ENCODE measurements at regions of chr2 and their contacts with region 1.

Region 1: DNA sequence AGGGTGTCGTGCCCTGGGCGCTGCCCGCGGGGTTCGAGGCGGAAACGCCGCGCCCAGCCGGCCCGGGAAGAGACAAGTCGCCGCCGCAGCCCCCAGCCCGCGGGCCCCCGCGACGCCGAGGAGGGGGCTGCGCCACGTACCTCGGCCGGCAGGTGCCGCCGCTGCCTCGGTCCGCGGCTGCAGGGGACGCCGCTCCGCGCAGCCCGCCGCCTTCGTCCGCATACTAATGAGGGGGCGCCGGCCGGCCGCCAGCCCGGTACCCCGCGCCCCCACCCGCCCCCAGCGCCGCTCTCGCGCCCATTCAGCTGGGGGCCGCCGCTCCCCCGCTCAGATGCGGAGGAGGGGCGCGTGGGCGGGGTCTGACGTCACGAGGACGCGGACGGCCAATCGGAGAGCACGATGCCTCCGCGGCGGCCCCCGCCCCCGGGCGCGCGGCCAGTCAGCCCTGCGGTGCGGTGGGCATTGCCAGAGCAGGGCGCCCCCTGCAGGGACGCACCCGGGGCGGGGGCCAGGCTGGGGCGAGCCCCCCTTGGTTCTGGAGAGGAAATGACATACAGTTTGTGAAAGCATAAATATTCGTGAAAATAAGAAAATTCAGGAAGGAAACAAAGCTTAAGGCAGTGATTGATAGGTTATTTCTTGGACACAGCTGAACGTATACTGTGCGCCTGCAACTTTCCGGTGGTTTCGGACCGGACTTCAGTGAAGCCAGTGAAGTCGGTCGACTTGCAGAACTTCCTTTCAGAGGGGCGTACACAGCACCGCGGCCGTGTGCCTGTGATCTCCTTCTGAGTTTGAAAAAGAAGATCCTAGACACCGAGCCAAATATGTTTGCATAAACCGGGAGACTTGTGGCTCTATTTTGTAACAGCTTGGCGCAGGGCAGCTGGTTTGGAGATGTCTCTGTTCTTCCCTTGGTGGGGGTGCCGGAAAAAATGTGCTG is at the start of gene ST3GAL5:
- DNase-seq: peak; percentile 89 to 96 (median 93)
- H3K4me3 ChIP-seq: peak within 1 kb of the TSS; percentile 97
- H3K4me3 Mint-ChIP-seq: peak within 1 kb of the TSS; percentile 94 to 99 (median 97)
- H3K27ac ChIP-seq: peak within 1 kb of the TSS; percentile 79
- H3K27ac Mint-ChIP-seq: peak within 1 kb of the TSS; percentile 95 to 99 (median 97)
- H3K4me1 ChIP-seq: peaks cover 44% of the 10 kb centered on the region
- H3K4me1 Mint-ChIP-seq: peaks cover 66 to 78% (median 76%) of the 10 kb centered on the region in 3 donors
- H3K27me3 ChIP-seq: no peaks in the 10 kb centered on the region
- H3K27me3 Mint-ChIP-seq: no peaks in the 10 kb centered on the region
- total RNA-seq, gene ST3GAL5: 11.1 to 11.2 TPM

Region 2: DNA sequence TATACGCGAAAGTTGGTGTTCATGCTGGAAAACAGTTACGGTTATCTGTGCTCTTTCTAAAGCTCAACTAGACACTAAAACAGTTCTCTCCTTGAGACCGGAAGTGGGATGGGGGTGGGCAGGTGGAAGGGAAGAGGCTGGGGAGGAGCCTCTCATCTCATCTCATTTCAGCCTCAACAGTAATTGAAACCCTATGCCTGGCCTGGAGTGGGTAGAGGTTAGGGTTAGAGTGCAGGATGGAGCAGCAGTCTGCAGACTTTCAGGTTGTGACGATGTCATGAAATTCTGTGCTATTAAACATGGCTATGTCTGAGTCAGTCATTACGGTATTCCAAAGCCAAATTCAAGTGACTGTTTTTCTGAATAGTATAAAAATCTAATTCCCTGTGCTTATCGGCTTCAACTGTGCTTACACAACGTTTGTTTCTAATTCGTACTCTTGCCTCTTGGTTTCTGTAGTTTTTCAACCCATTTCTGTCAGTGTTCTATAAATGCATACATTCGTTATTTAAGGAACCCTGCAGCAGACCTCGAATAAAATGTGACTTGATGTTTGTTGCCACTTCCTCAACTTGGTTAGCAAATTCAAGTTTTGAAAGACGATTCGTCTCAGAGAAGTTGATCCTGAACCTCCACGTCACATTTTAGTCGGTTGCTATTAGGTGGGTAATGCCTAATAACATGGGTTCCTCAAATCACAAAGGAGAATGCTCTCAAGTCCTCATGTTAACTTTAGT is 831.6 kb before region 1 on chr2:
- CTCF ChIA-PET with region 1: no interaction called
- POLR2A ChIA-PET with region 1: no interaction called
- DNase-seq: no peak
- H3K4me3 ChIP-seq: no peak overlapping the region
- H3K4me3 Mint-ChIP-seq: no peak overlapping the region
- H3K27ac ChIP-seq: no peak overlapping the region
- H3K27ac Mint-ChIP-seq: peak overlapping the region in 2 of 8 donors; percentile 17 to 76
- H3K4me1 ChIP-seq: no peaks in the 10 kb centered on the region
- H3K4me1 Mint-ChIP-seq: peaks cover 13 to 39% (median 37%) of the 10 kb centered on the region in 3 donors
- H3K27me3 ChIP-seq: no peaks in the 10 kb centered on the region
- H3K27me3 Mint-ChIP-seq: no peaks in the 10 kb centered on the region

Region 3: GRCh38 chr2:85584857-85585783 is 303.8 kb before region 1 on chr2:
- CTCF ChIA-PET with region 1: no interaction called
- POLR2A ChIA-PET with region 1: no interaction called
- DNase-seq: peak in 1 of 5 donors; percentile 15
- H3K4me3 ChIP-seq: peak overlapping the region; percentile 78
- H3K4me3 Mint-ChIP-seq: peak overlapping the region; percentile 87 to 98 (median 91)
- H3K27ac ChIP-seq: peak overlapping the region; percentile 38
- H3K27ac Mint-ChIP-seq: peak overlapping the region; percentile 87 to 95 (median 92)
- H3K4me1 ChIP-seq: peaks cover 44% of the 10 kb centered on the region
- H3K4me1 Mint-ChIP-seq: peaks cover 43 to 60% (median 45%) of the 10 kb centered on the region in 3 donors
- H3K27me3 ChIP-seq: no peaks in the 10 kb centered on the region
- H3K27me3 Mint-ChIP-seq: peaks cover 0 to 1% of the 10 kb centered on the region in 2 donors

Region 4: DNA sequence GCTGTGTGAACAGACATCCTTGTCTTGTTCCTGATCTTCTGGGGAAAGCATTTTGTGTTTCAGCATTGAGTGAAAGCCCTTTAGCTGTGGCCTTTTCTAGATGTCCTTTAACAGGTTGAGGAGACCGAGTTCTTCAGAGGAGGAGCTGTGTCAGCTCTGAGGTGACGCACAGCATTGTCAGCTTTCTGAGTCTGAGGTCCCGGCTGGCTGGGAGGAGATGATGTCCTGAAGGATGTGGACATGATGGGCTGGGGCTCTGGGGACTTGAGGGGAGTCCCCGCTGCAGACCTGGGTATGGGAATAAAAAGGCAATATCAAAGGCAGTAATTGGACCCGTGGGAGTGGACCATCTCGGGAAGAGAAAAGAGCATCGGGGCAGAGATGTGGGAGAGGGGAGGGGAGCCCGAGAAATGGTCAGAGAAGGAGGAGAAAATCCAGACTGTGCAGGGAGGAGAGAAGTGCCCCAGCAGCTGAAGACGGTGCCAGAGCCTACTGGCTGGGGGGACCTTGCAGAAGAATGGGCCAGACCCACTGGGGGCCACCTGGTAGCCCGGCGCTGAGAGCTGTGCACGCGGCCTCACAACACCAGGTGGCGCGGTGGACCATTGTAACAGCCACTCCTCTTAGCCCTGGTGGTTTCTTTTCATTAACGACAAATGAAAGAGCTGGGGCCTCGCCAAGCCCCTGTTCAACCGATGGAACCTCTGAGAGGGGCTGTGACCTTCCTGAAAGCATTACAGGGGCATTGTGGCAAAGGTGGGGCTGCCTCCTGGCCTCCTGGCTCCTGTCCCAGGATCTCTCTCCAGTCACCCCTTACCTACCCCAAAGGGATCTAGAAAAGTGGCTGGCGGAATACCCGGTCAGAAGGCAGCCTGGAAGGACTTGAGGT is 61.7 kb before region 1 on chr2:
- CTCF ChIA-PET with region 1: interaction called, 95 read pairs
- POLR2A ChIA-PET with region 1: interaction called, 28 read pairs
- DNase-seq: peak; percentile 74 to 88 (median 76)
- H3K4me3 ChIP-seq: no peak overlapping the region
- H3K4me3 Mint-ChIP-seq: peak overlapping the region in 3 of 7 donors; percentile 24 to 47 (median 37)
- H3K27ac ChIP-seq: no peak overlapping the region
- H3K27ac Mint-ChIP-seq: peak overlapping the region in 7 of 8 donors; percentile 51 to 93 (median 74)
- H3K4me1 ChIP-seq: peaks cover 12% of the 10 kb centered on the region
- H3K4me1 Mint-ChIP-seq: peaks cover 21 to 33% (median 29%) of the 10 kb centered on the region in 3 donors
- H3K27me3 ChIP-seq: no peaks in the 10 kb centered on the region
- H3K27me3 Mint-ChIP-seq: peaks cover 2 to 13% of the 10 kb centered on the region in 2 donors

Region 5: GRCh38 chr2:85846411-85846810 is 42.5 kb before region 1 on chr2:
- CTCF ChIA-PET with region 1: interaction called, 97 read pairs
- POLR2A ChIA-PET with region 1: no interaction called
- DNase-seq: no peak
- H3K4me3 ChIP-seq: no peak overlapping the region
- H3K4me3 Mint-ChIP-seq: no peak overlapping the region
- H3K27ac ChIP-seq: no peak overlapping the region
- H3K27ac Mint-ChIP-seq: peak overlapping the region; percentile 24 to 88 (median 78)
- H3K4me1 ChIP-seq: peaks cover 19% of the 10 kb centered on the region
- H3K4me1 Mint-ChIP-seq: peaks cover 34 to 74% (median 57%) of the 10 kb centered on the region in 3 donors
- H3K27me3 ChIP-seq: no peaks in the 10 kb centered on the region
- H3K27me3 Mint-ChIP-seq: peaks cover 0 to 1% of the 10 kb centered on the region in 2 donors

Region 6: DNA sequence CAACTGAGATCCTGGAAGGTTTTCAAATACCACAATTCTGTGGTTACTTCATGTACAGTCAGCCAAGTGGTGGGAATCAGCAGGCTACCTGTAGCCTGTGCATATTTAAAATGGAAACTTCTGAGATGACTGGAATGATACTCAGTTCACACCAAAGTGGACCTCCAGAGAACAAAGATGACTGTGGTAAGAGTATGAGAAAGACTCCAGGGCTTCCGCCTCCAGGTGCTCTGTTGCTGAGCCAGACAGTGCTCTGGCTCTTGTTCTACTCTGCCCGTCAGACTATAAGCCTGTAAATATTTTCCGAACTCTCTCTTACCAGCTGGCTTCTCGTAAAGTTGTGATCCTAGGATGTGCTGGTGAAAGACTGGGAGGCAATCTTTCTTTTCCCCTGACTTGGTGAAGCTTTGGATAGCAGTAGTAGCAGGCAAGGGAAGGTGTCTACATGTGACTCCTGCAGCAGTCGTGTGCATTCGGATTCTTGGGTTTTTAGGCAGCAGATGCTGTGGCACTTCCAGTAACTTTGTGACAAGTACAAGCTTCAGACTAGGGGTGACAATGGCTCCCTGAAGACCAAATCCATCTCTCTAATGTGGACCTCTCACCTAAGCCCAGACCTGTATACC is 23.3 kb before region 1 on chr2:
- CTCF ChIA-PET with region 1: interaction called, 20 read pairs
- POLR2A ChIA-PET with region 1: interaction called, 4 read pairs
- DNase-seq: no peak
- H3K4me3 ChIP-seq: no peak overlapping the region
- H3K4me3 Mint-ChIP-seq: peak overlapping the region in 3 of 7 donors; percentile 9 to 73 (median 32)
- H3K27ac ChIP-seq: no peak overlapping the region
- H3K27ac Mint-ChIP-seq: peak overlapping the region; percentile 61 to 99 (median 80)
- H3K4me1 ChIP-seq: peaks cover 38% of the 10 kb centered on the region
- H3K4me1 Mint-ChIP-seq: peaks cover 62 to 82% (median 80%) of the 10 kb centered on the region in 3 donors
- H3K27me3 ChIP-seq: no peaks in the 10 kb centered on the region
- H3K27me3 Mint-ChIP-seq: peaks cover 0 to 2% of the 10 kb centered on the region in 2 donors

Region 7: GRCh38 chr2:85902496-85902895 is 13.5 kb after region 1 on chr2:
- CTCF ChIA-PET with region 1: interaction called, 28 read pairs
- POLR2A ChIA-PET with region 1: no interaction called
- DNase-seq: no peak
- H3K4me3 ChIP-seq: no peak overlapping the region
- H3K4me3 Mint-ChIP-seq: no peak overlapping the region
- H3K27ac ChIP-seq: no peak overlapping the region
- H3K27ac Mint-ChIP-seq: peak overlapping the region in 3 of 8 donors; percentile 24 to 86 (median 66)
- H3K4me1 ChIP-seq: no peaks in the 10 kb centered on the region
- H3K4me1 Mint-ChIP-seq: peaks cover 18 to 23% (median 20%) of the 10 kb centered on the region in 3 donors
- H3K27me3 ChIP-seq: no peaks in the 10 kb centered on the region
- H3K27me3 Mint-ChIP-seq: peaks cover 0 to 4% of the 10 kb centered on the region in 2 donors

Region 8: GRCh38 chr2:85976106-85976920 is 87.4 kb after region 1 on chr2:
- CTCF ChIA-PET with region 1: no interaction called
- POLR2A ChIA-PET with region 1: no interaction called
- DNase-seq: no peak
- H3K4me3 ChIP-seq: no peak overlapping the region
- H3K4me3 Mint-ChIP-seq: no peak overlapping the region
- H3K27ac ChIP-seq: no peak overlapping the region
- H3K27ac Mint-ChIP-seq: no peak overlapping the region
- H3K4me1 ChIP-seq: no peaks in the 10 kb centered on the region
- H3K4me1 Mint-ChIP-seq: peaks cover 0 to 2% (median 0%) of the 10 kb centered on the region in 3 donors
- H3K27me3 ChIP-seq: no peaks in the 10 kb centered on the region
- H3K27me3 Mint-ChIP-seq: peaks cover 0 to 8% of the 10 kb centered on the region in 2 donors

Region 9: DNA sequence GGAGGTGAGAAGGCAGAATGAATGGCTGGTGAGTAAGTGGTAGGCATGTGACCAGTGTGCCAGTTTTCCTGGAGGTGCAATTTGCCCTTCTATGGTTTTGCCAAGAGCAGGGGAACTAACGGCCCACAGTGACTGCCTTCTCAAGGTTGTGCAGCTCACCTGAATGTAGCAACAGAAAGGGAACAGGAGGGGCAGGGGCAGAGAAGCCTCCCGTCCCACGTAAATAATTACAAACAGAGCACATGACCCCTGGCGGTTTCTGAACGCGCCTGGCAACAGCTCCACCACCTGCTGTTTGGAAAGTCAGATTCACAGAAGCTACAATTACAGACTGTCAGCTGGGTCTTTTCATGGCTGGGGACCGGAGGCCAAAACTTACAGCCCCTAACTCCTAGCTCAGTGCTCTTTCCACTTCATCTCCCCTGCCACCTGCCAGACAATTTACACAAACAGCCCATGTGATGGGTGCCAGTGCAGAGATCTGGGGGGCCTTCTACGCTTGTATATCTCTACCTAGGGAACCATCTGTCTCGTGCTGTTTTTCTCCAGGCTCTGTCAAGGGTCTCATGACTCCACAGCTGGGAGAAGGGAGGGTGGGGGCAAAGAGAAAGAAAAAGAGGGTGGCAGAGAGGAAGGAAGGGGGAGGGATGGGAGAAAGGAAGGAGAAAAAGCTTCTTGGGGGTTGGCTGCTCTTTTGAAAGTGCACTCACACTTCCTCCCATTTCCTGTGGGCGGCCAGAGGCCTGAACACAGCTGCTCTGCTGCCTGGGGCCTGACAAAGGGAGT is 147.1 kb after region 1 on chr2:
- CTCF ChIA-PET with region 1: interaction called, 75 read pairs
- POLR2A ChIA-PET with region 1: interaction called, 26 read pairs
- DNase-seq: peak; percentile 47 to 85 (median 78)
- H3K4me3 ChIP-seq: peak overlapping the region; percentile 53
- H3K4me3 Mint-ChIP-seq: peak overlapping the region; percentile 68 to 96 (median 85)
- H3K27ac ChIP-seq: peak overlapping the region; percentile 78
- H3K27ac Mint-ChIP-seq: peak overlapping the region; percentile 97 to 100 (median 100)
- H3K4me1 ChIP-seq: peaks cover 84% of the 10 kb centered on the region
- H3K4me1 Mint-ChIP-seq: peaks cover 76 to 79% (median 78%) of the 10 kb centered on the region in 3 donors
- H3K27me3 ChIP-seq: no peaks in the 10 kb centered on the region
- H3K27me3 Mint-ChIP-seq: peaks cover 0 to 6% of the 10 kb centered on the region in 2 donors

Region 10: DNA sequence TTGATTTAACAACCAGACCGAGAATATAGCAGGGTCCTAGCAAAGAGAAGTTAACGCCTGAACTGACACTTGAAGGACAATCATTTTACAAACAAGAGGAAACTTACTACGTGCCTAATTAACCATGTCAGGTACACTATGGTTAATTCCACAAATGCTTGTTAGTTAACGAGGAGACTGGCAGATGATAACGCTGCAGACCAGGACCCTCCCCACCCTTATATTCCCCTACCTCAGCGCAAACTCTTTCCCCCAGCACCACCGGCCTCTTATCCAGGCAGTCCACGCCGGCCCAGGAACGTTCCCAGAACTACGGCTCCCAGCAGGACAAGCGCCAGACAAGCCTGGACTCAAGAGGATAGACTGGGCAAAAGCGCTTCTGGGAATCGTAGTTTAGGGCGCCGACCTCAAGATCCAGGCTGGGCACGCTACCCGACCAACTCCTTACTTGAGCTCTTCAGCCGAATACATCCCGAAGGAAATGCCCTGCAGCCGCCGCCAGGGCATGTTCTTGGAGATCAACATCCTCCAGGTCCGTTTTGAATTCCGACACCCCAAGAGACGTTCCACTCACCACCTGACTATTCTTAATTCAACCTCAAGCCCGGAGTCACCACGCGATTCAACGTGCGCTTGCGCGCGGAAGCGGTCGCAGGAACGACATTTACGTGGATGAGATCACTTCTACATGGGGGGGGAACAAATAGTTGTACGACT is 216.5 kb after region 1 on chr2 and contains the start of gene POLR1A:
- CTCF ChIA-PET with region 1: interaction called, 10 read pairs
- POLR2A ChIA-PET with region 1: no interaction called
- DNase-seq: peak; percentile 68 to 90 (median 86)
- H3K4me3 ChIP-seq: peak within 1 kb of the TSS; percentile 94
- H3K4me3 Mint-ChIP-seq: peak within 1 kb of the TSS; percentile 87 to 97 (median 92)
- H3K27ac ChIP-seq: peak within 1 kb of the TSS; percentile 85
- H3K27ac Mint-ChIP-seq: peak within 1 kb of the TSS; percentile 91 to 100 (median 99)
- H3K4me1 ChIP-seq: peaks cover 34% of the 10 kb centered on the region
- H3K4me1 Mint-ChIP-seq: peaks cover 56 to 82% (median 81%) of the 10 kb centered on the region in 3 donors
- H3K27me3 ChIP-seq: no peaks in the 10 kb centered on the region
- H3K27me3 Mint-ChIP-seq: no peaks in the 10 kb centered on the region
- total RNA-seq, gene POLR1A: 60.3 to 63.3 TPM